SK-N-SH (cell line): ENCODE measurements at regions of chr9 and their contacts with region 1.

Region 1: GRCh38 chr9:21110708-21111576 is 30.7 kb downstream of the IFNW1 start:
- DNase-seq: peak; percentile 58
- H3K4me3 ChIP-seq: no peak overlapping the region
- H3K27ac ChIP-seq: no peak overlapping the region
- H3K4me1 ChIP-seq: no peaks in the 10 kb centered on the region
- H3K27me3 ChIP-seq: no peaks in the 10 kb centered on the region
- CTCF ChIP-seq: peak; percentile 91
- EP300 ChIP-seq: no peak
- RAD21 ChIP-seq: peak; percentile 96

Region 2: DNA sequence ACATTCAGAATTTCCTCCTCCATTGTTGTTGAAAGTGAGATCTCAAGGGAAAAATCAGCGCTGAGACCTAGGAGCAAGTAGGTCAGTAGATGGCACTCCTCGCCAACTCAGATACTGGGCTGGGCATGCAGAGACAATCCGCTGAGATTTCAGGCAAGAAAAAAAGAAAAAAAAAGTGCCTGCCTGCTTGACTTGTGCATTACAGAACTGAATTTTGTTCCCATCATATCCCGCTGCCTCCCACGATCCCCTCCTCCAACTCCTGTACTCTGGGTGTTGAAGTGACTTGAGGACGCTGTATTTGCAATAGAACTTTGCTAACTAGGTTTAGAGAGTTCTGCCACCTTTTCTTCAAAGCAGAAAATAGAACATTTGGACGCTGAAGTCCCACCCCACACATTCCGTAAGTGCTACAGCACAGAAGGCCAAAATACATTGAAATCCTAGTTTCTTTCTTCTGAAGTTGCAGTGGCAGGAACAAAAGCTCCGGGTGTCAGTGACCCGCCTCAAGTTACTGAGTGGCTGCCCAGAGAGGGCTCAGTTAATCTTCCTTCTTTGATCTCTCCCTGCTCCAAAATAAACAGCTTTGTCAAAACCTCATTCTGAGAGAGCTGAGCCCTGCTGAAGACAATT is 754.4 kb before region 1 on chr9:
- CTCF ChIA-PET with region 1: interaction called, 21 read pairs
- POLR2A ChIA-PET with region 1: interaction called, 5 read pairs
- DNase-seq: peak; percentile 68
- H3K4me3 ChIP-seq: peak overlapping the region in 1 of 2 experiments; percentile 32; a peak in 1 of 4 replicates
- H3K27ac ChIP-seq: peak overlapping the region in 1 of 2 experiments; percentile 40; a peak in 1 of 4 replicates
- H3K4me1 ChIP-seq: peaks cover 15 to 19% of the 10 kb centered on the region in 2 experiments
- H3K27me3 ChIP-seq: no peaks in the 10 kb centered on the region
- CTCF ChIP-seq: peak; percentile 91
- EP300 ChIP-seq: no peak
- RAD21 ChIP-seq: peak; percentile 98

Region 3: DNA sequence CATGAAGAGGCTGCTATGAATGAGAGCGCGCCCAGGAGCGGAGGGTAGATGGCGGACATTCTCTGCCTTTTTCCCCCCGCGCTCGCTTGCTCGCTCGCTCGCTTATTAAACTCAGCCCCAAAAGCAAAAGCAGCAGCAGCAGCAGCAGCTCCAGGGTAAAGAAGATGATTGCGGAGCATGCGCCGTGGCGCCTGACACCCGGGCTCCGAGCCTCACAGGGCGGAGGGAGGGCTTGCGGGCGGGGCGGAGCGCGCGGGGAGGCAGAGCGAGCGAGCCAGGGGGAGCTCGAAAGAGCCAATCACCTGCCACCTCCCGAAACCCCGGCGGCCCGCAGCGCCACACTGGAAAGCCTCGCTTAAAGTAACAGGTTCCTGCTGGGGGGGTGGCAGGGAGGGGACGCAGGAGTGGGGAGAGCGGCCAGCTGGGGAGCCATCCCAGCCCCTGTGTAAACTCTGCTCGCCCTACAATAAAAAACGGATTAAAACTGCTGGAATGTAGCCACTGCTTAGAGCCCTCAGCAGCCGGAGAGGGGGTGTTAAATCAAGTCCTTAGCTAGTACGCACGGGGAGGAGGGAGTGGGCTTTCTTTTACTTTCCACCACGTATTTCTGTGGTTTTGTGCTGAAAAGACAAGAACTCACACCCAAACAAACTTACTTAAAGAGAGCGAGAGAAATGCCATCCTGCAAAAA is 488.5 kb before region 1 on chr9 and contains the start of gene MLLT3:
- CTCF ChIA-PET with region 1: interaction called, 32 read pairs
- POLR2A ChIA-PET with region 1: no interaction called
- DNase-seq: peak; percentile 96
- H3K4me3 ChIP-seq: peak within 1 kb of the TSS; percentile 81 to 100
- H3K27ac ChIP-seq: peak within 1 kb of the TSS; percentile 79 to 90
- H3K4me1 ChIP-seq: peaks cover 6 to 8% of the 10 kb centered on the region in 2 experiments; a peak in 3 of 4 replicates
- H3K27me3 ChIP-seq: no peaks in the 10 kb centered on the region
- CTCF ChIP-seq: no peak
- EP300 ChIP-seq: no peak
- RAD21 ChIP-seq: 0 out of 2 replicates have a peak, but pooled peaks have one; percentile 4
- polyA plus RNA-seq, gene MLLT3: 3.9 and 6.2 TPM in 2 replicates

Region 4: DNA sequence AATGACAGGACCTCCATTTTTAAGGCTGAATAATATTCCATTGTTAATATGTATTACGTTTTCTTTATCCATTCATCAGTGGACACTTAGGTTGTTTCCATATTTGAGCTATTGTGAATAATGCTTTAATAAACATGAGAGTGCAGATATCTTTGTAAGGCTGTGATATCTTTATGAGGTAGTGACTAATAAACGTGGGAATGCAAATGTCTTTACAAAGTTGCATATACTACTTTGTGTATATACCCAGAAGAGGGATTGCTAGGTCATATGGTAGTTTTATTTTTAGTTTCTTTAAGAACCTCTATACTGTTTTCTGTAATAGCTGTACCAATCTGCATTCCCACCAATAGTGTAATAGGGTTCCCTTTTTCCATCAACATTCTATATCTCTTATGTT is 278.2 kb before region 1 on chr9:
- CTCF ChIA-PET with region 1: no interaction called
- POLR2A ChIA-PET with region 1: no interaction called
- DNase-seq: no peak
- H3K4me3 ChIP-seq: no peak overlapping the region
- H3K27ac ChIP-seq: no peak overlapping the region
- H3K4me1 ChIP-seq: no peaks in the 10 kb centered on the region
- H3K27me3 ChIP-seq: no peaks in the 10 kb centered on the region
- CTCF ChIP-seq: no peak
- EP300 ChIP-seq: no peak
- RAD21 ChIP-seq: no peak

Region 5: DNA sequence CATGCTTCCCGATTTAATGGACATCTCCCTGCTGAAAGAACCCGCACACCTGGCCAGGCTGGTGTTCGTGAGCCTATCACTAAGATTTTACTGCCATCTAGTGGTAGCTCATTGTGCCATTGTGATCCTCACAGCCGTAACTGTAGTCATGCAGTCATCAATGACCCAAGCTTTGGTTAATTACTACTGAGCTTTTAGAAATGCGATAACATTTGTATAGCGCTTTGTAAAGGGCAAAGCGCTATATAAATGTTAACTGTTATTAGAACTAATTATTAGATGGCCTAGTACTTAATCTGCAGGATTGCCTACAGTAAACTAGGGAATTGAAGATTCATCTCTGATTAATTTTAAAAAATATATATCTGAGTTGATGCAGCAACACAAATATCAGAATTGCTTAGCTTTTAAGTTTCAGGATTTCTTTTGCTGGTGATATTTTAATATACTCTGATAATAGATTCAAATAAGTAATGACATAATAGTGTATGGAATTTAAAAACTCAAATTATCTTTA is 169.7 kb before region 1 on chr9:
- CTCF ChIA-PET with region 1: interaction called, 24 read pairs
- POLR2A ChIA-PET with region 1: no interaction called
- DNase-seq: peak; percentile 63
- H3K4me3 ChIP-seq: peak overlapping the region in 1 of 2 experiments; percentile 27; a peak in 1 of 4 replicates
- H3K27ac ChIP-seq: no peak overlapping the region
- H3K4me1 ChIP-seq: no peaks in the 10 kb centered on the region
- H3K27me3 ChIP-seq: no peaks in the 10 kb centered on the region
- CTCF ChIP-seq: peak; percentile 93
- EP300 ChIP-seq: no peak
- RAD21 ChIP-seq: peak; percentile 97

Region 6: GRCh38 chr9:21096172-21096900 is 14.6 kb before region 1 on chr9:
- CTCF ChIA-PET with region 1: interaction called, 20 read pairs
- POLR2A ChIA-PET with region 1: no interaction called
- DNase-seq: no peak
- H3K4me3 ChIP-seq: no peak overlapping the region
- H3K27ac ChIP-seq: no peak overlapping the region
- H3K4me1 ChIP-seq: peaks cover 0 to 4% of the 10 kb centered on the region in 2 experiments; a peak in 1 of 4 replicates
- H3K27me3 ChIP-seq: no peaks in the 10 kb centered on the region
- CTCF ChIP-seq: no peak
- EP300 ChIP-seq: no peak
- RAD21 ChIP-seq: no peak

Region 7: DNA sequence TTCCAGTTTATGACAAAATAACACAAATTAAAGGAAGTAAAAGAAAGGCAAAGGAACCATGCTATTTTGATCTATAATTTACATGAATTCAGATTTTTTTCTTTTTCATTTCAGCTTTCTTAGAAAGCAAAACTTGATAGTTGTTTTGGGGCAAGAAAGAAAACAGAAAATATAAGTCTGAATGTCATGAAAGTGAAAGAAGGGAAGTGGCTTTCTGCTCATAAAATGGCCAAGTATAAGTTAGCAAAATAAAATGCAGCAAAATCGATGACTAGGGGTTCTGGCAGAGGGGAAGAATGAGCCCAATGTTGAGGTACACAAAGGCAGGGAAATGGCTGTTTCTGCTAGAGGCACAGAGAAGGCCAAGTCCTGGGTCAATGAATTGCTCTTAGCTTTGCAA is 33.7 kb after region 1 on chr9:
- CTCF ChIA-PET with region 1: no interaction called
- POLR2A ChIA-PET with region 1: no interaction called
- DNase-seq: no peak
- H3K4me3 ChIP-seq: no peak overlapping the region
- H3K27ac ChIP-seq: no peak overlapping the region
- H3K4me1 ChIP-seq: no peaks in the 10 kb centered on the region
- H3K27me3 ChIP-seq: no peaks in the 10 kb centered on the region
- CTCF ChIP-seq: no peak
- EP300 ChIP-seq: no peak
- RAD21 ChIP-seq: no peak

Region 8: GRCh38 chr9:21668516-21668915 is 557.6 kb after region 1 on chr9:
- CTCF ChIA-PET with region 1: no interaction called
- POLR2A ChIA-PET with region 1: no interaction called
- DNase-seq: no peak
- H3K4me3 ChIP-seq: no peak overlapping the region
- H3K27ac ChIP-seq: no peak overlapping the region
- H3K4me1 ChIP-seq: no peaks in the 10 kb centered on the region
- H3K27me3 ChIP-seq: peaks cover 51% of the 10 kb centered on the region
- CTCF ChIP-seq: no peak
- EP300 ChIP-seq: no peak
- RAD21 ChIP-seq: no peak